Aorta (tissue), 5 donors: ENCODE measurements at regions of chr1 and their contacts with region 1.

Region 1: GRCh38 chr1:66316464-66317247 is 217.3 kb upstream of the SGIP1 start:
- DNase-seq: no peak
- ATAC-seq: peak; percentile 92
- H3K4me3 ChIP-seq: no peak overlapping the region
- H3K27ac ChIP-seq: peak overlapping the region; percentile 96 to 100
- H3K4me1 ChIP-seq: peaks cover 0 to 3% of the 10 kb centered on the region in 2 donors
- H3K27me3 ChIP-seq: no peaks in the 10 kb centered on the region

Region 2: DNA sequence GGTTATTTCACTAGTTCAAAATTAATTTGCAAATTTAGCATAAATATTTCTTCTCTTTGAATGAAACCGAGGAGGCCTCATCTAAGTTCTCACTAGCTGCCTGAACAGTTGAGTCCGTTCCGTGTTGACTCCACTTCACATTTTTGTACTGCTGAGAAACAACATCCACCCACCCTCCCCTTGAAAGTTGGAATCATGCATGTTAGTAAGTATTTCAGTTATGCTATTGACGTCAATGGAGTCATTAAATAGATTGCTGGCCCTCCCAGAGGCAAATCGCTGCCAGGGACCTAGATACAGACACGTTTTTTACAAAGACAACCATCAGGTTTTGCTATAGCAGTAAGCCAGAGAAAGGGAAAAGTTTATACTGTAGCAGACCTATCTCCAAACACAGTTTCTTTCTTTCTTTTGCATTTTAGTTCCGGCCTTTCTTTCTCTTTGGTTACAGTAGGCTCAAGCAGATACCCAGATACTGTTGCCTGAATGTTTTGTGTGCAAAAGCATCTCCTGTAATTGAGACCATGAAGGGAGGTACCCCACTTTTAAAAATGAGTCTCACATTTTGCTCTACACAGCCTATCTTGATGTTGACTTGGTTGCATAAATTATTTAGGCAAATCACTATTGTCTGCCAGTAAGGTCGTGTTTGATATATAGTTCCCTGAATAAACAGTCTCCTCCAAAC is 45.3 kb before region 1 on chr1:
- intact Hi-C with region 1: loop called (anchors 5 kb)
- DNase-seq: peak; percentile 82 to 84
- ATAC-seq: peak; percentile 95
- H3K4me3 ChIP-seq: no peak overlapping the region
- H3K27ac ChIP-seq: peak overlapping the region; percentile 58 to 59
- H3K4me1 ChIP-seq: peaks cover 0 to 2% of the 10 kb centered on the region in 2 donors
- H3K27me3 ChIP-seq: no peaks in the 10 kb centered on the region

Region 3: DNA sequence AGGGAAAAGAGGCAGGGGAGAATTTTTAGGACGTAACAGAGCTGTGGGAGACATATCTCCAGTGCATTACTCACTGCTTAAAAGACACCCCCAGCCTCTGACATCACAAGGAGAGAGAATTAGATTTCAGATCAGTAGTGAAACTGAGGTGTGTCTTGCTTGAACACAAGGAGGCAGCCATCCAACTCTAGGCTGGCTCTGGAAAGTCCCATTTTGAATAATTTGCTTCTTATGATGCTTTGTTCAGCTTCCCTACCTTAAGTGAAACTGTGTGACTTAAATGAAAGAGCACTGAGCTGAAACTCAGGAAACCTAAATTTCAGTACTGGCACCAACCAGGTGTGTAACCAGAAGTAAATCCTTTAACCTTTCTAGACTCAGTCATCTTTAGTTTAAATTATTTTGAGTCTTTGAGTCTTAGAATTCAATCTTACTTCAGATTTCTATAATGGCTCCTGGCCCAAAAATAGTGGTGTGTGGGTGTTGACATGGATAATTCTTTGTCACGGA is 34.3 kb before region 1 on chr1:
- intact Hi-C with region 1: loop called in 1 of 2 experiments (anchors 5 kb)
- DNase-seq: peak in 1 of 2 donors; percentile 54
- ATAC-seq: peak; percentile 13
- H3K4me3 ChIP-seq: no peak overlapping the region
- H3K27ac ChIP-seq: peak overlapping the region in 1 of 2 donors; percentile 68
- H3K4me1 ChIP-seq: peaks cover 1 to 10% of the 10 kb centered on the region in 2 donors
- H3K27me3 ChIP-seq: no peaks in the 10 kb centered on the region

Region 4: DNA sequence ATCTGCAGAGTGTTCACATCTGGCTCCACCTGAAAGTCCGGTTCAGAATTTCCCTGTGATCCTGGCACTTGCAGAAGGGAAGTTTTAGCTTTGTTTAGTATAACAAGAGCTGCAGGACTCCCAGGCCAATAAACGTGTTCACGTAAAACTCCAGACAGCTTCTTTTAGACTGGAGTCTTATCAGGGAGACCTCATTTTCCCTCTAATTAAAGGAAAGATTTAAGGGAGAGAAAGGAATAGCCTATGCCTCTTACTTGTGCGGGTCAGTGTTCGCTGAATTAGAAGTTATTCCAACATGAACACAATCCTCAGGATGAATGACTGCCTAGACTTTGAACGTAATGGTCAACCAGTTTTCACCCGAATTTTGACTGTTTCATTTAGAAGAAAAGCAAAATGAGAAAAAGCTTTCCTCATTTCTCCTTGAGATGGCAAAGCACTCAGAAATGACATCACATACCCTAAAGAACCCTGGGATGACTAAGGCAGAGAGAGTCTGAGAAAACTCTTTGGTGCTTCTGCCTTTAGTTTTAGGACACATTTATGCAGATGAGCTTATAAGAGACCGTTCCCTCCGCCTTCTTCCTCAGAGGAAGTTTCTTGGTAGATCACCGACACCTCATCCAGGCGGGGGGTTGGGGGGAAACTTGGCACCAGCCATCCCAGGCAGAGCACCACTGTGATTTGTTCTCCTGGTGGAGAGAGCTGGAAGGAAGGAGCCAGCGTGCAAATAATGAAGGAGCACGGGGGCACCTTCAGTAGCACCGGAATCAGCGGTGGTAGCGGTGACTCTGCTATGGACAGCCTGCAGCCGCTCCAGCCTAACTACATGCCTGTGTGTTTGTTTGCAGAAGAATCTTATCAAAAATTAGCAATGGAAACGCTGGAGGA is 15.2 kb after region 1 on chr1:
- intact Hi-C with region 1: loop called in 1 of 2 experiments (anchors 1 kb)
- DNase-seq: peak; percentile 83 to 86
- ATAC-seq: peak; percentile 78
- H3K4me3 ChIP-seq: peak overlapping the region; percentile 13 to 54
- H3K27ac ChIP-seq: peak overlapping the region; percentile 38 to 91
- H3K4me1 ChIP-seq: peaks cover 0 to 7% of the 10 kb centered on the region in 2 donors
- H3K27me3 ChIP-seq: no peaks in the 10 kb centered on the region